Esophagus muscularis mucosa (tissue), 4 donors: ENCODE measurements at regions of chr19 and their contacts with region 1.

Region 1: DNA sequence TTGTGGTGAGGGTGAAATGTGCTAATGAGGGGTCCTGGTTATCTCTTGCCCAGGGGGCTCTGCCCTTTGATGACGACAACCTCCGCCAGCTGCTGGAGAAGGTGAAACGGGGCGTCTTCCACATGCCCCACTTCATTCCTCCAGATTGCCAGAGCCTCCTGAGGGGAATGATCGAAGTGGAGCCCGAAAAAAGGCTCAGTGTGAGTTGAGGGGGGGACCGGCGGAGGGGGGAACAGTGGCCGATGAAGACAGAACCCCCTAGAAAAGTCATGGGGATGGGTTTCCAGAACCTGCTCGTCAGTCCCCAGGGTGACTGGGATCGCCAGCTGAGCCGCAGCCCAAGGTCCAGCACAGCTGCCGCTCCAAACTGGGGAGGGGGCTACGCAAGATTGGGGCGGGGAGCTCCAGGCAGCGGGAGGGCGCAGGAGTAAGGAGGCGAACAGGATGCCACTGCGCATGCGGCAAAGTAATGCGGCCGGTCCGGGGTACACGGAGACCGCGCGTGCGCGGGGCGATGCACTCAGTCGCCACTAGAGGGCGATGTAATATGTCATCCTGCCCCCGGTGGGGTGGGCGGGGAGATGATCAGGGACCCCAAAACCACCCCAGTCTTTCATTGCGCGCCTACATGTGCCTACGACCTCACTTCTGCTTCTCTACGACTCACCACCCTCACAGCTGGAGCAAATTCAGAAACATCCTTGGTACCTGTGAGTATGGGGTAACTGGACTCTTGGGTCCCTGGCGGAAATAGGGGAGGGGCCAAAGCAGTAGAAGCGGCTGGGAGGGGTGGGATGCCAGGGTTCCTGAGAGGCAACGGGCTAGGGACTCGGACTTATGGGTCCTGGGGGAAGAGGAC is 17.9 kb downstream of the BRSK1 start:
- DNase-seq: peak; percentile 94
- H3K4me3 ChIP-seq: peak overlapping the region; percentile 36 to 50 (median 38)
- H3K27ac ChIP-seq: peak overlapping the region in 1 of 4 donors; percentile 10
- H3K4me1 ChIP-seq: peaks cover 9 to 12% (median 10%) of the 10 kb centered on the region in 4 donors
- H3K27me3 ChIP-seq: no peaks in the 10 kb centered on the region
- CTCF ChIP-seq: peak in 2 of 3 experiments; percentile 98 to 99
- EP300 ChIP-seq: no peak
- POLR2A ChIP-seq: no peak

Region 2: GRCh38 chr19:55341171-55341588 is 39.5 kb after region 1 on chr19:
- intact Hi-C with region 1: loop called (anchors 5 kb)
- DNase-seq: no peak
- H3K4me3 ChIP-seq: peak overlapping the region; percentile 76 to 91 (median 84)
- H3K27ac ChIP-seq: peak overlapping the region; percentile 91 to 97 (median 93)
- H3K4me1 ChIP-seq: peaks cover 17 to 44% (median 38%) of the 10 kb centered on the region in 4 donors
- H3K27me3 ChIP-seq: peaks cover 0 to 3% (median 0%) of the 10 kb centered on the region in 4 donors
- CTCF ChIP-seq: no peak
- EP300 ChIP-seq: no peak
- POLR2A ChIP-seq: no peak

Region 3: DNA sequence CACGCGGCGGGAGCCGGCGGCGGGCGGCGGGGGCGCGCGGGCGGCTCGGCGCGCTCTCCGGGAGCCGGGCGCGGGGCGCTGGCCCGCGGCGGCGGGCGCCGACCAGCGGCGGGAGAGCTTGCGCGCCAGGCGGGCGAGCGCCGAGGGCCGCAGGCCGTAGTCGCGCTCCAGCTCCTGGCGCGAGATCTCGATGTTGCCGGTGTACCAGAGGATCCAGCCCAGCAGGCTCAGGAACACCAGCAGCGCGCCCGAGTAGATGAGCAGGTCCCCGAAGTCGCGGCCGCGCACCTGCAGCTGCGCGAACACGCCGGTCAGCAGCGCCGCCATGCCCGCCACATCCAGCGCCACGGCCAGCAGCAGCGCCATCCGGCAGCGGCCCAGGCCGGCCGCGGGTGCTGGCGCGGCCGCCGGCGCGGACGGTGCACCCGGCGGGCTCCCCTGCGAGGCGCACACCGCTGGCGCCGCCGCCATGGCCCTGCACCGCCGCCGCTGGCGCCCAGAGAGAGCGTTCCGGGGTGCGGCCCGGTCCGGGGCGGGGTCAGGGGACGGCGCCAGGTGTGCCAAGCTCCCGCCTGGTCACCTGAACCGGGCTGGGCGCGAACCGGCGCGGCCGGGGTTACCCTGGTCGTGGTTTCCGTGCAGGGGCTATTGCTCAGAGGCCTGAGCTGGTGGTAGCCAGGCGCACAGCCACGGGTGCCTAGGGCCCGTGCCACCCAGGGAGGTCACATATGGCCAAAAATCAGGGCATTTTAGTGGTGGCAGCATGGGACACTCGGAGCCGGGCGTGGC is 82.3 kb after region 1 on chr19 and contains the start of gene TMEM238:
- intact Hi-C with region 1: loop called (anchors 5 kb)
- DNase-seq: no peak
- H3K4me3 ChIP-seq: peak within 1 kb of the TSS; percentile 71 to 87 (median 77)
- H3K27ac ChIP-seq: peak within 1 kb of the TSS; percentile 88 to 94 (median 90)
- H3K4me1 ChIP-seq: peaks cover 42 to 50% (median 46%) of the 10 kb centered on the region in 4 donors
- H3K27me3 ChIP-seq: no peaks in the 10 kb centered on the region
- CTCF ChIP-seq: peak; percentile 13 to 50 (median 38)
- EP300 ChIP-seq: no peak
- POLR2A ChIP-seq: no peak
- total RNA-seq, gene TMEM238: 0.83 to 7.5 (median 1.00) TPM

Region 4: DNA sequence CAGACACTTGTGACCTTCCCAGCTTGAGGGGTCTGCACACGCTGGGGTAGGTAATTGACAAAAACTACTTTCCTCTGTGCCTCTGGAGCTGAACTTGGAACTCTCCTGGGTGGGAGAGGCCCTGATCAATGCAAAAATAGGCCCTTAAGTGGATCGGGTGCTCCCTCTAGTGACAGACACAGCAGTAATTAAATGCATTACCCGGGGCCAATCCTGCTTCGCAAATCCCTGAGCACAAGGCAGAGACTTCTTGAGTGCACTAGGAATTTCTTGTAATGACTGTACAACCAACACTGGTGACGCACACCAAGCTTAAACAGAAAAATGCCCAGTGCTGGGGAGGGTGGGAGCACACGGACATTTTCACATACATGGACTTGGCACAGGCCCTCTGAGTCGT is 116.5 kb after region 1 on chr19:
- intact Hi-C with region 1: loop called (anchors 10 kb)
- DNase-seq: no peak
- H3K4me3 ChIP-seq: no peak overlapping the region
- H3K27ac ChIP-seq: no peak overlapping the region
- H3K4me1 ChIP-seq: no peaks in the 10 kb centered on the region
- H3K27me3 ChIP-seq: peaks cover 0 to 59% (median 0%) of the 10 kb centered on the region in 4 donors
- CTCF ChIP-seq: peak; percentile 53 to 65 (median 61)
- EP300 ChIP-seq: no peak
- POLR2A ChIP-seq: no peak